GM12878 (cell line): ENCODE measurements at regions of chr12 and their contacts with region 1.

Region 1: GRCh38 chr12:89524541-89525285 is at the start of gene GALNT4:
- DNase-seq: peak; percentile 42
- ATAC-seq: peak; percentile 86
- H3K4me3 ChIP-seq: peak within 1 kb of the TSS; percentile 96
- H3K27ac ChIP-seq: peak within 1 kb of the TSS; percentile 82
- H3K4me1 ChIP-seq: peaks cover 14% of the 10 kb centered on the region
- H3K27me3 ChIP-seq: no peaks in the 10 kb centered on the region
- CTCF ChIP-seq: peak; percentile 55 to 75 (median 61)
- EP300 ChIP-seq: no peak
- POLR2A ChIP-seq: peak; percentile 65
- RAD21 ChIP-seq: peak; percentile 69
- polyA plus RNA-seq, gene GALNT4: 0.90 to 1.1 TPM

Region 2: GRCh38 chr12:89019408-89020120 is 505.1 kb before region 1 on chr12:
- CTCF ChIA-PET with region 1: interaction called, 11 read pairs
- POLR2A ChIA-PET with region 1: no interaction called
- RAD21 ChIA-PET with region 1: interaction called, 5 read pairs
- SMC1A ChIA-PET with region 1: interaction called, 6 read pairs
- in situ Hi-C with region 1: loop called (anchors 5 kb)
- intact Hi-C with region 1: loop called (anchors 1 kb)
- DNase-seq: peak; percentile 32
- ATAC-seq: peak; percentile 99
- H3K4me3 ChIP-seq: no peak overlapping the region
- H3K27ac ChIP-seq: no peak overlapping the region
- H3K4me1 ChIP-seq: no peaks in the 10 kb centered on the region
- H3K27me3 ChIP-seq: no peaks in the 10 kb centered on the region
- CTCF ChIP-seq: peak; percentile 76 to 91 (median 77); a peak in 5 of 6 replicates
- EP300 ChIP-seq: no peak
- POLR2A ChIP-seq: no peak
- RAD21 ChIP-seq: peak; percentile 91

Region 3: DNA sequence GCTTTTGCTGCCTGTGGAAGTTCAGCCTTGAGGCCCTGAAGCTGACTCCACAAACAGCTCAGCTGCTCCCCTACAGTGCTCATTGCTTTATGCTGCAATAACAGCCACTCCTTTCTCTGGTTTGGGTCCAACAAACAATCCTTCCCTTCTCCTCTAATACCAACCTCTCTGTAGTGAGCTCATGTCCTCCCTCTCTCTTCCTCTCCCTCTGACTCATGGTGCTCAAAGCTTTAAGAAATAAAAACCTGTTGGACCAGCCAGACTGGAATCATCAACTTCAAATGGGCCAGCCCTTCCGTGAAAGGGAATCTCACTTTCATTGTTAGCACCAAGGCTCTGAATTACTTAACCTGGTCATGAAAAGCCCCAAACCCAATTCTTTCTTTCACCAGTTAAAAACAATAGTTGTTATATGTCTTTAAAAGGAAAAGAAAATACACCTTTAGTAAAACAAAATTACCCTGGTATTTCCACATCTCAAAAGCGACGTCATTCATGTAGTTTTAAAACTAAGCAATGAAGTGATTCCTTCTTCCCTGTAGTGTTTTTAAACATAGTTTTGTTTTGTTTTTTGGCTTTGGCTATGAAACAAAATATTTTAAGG is 298.8 kb before region 1 on chr12:
- CTCF ChIA-PET with region 1: interaction called, 3 read pairs
- POLR2A ChIA-PET with region 1: no interaction called
- RAD21 ChIA-PET with region 1: no interaction called
- SMC1A ChIA-PET with region 1: no interaction called
- in situ Hi-C with region 1: no loop called
- intact Hi-C with region 1: loop called (anchors 10 kb)
- DNase-seq: no peak
- ATAC-seq: peak; percentile 82
- H3K4me3 ChIP-seq: no peak overlapping the region
- H3K27ac ChIP-seq: no peak overlapping the region
- H3K4me1 ChIP-seq: no peaks in the 10 kb centered on the region
- H3K27me3 ChIP-seq: no peaks in the 10 kb centered on the region
- CTCF ChIP-seq: no peak
- EP300 ChIP-seq: no peak
- POLR2A ChIP-seq: no peak
- RAD21 ChIP-seq: no peak

Region 4: GRCh38 chr12:89405626-89406345 is 118.9 kb before region 1 on chr12:
- CTCF ChIA-PET with region 1: no interaction called
- POLR2A ChIA-PET with region 1: no interaction called
- RAD21 ChIA-PET with region 1: no interaction called
- SMC1A ChIA-PET with region 1: no interaction called
- in situ Hi-C with region 1: no loop called
- intact Hi-C with region 1: no loop called
- DNase-seq: no peak
- ATAC-seq: no peak
- H3K4me3 ChIP-seq: no peak overlapping the region
- H3K27ac ChIP-seq: no peak overlapping the region
- H3K4me1 ChIP-seq: no peaks in the 10 kb centered on the region
- H3K27me3 ChIP-seq: no peaks in the 10 kb centered on the region
- CTCF ChIP-seq: no peak
- EP300 ChIP-seq: no peak
- POLR2A ChIP-seq: no peak
- RAD21 ChIP-seq: no peak

Region 5: DNA sequence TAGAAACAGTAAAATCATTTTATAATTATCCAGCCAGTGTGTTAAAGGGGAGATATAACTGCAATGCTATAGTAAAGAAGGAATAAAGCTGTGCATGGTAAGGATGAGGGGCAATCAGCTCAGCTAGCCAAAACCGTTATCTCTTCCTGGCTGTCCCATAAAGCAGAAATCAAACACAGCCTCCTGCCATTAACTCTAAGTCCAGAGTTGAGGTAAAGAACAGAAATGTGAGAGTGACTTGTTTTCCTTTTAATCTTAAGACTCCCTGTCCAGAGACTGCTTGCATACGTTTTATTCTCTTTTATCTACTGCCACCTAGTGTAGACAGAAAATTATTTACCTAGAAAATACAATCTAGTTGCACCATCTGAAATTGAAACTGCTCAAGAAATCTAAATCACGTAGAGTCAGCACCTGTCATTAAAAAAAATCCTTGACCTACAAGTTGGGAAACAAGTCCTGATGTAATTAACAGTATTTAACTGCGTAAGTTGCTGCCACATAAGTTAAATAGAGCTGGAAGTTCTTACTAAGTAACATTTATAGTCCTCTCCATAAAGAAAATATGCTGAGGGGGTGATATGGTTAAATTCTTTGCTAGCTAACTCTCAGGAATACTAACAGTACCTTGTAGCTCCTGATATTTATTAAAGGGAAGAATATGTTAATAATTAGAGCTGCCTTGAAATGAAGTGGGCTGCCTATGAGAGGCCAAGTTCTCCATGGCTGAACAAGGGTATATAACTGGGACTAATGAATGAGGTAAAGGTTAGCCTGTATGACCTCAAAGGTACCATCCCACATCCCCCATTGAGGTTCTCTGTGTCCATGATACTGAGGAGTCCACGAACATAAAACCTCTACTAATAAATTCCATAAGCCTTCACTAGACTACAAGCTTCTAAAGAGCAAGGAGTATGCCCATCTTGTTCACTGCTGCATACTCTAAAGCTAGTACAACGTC is 62.8 kb before region 1 on chr12:
- CTCF ChIA-PET with region 1: interaction called, 176 read pairs
- POLR2A ChIA-PET with region 1: interaction called, 3 read pairs
- RAD21 ChIA-PET with region 1: interaction called, 9 read pairs
- SMC1A ChIA-PET with region 1: interaction called, 70 read pairs
- in situ Hi-C with region 1: no loop called
- intact Hi-C with region 1: no loop called
- DNase-seq: no peak
- ATAC-seq: peak; percentile 97
- H3K4me3 ChIP-seq: no peak overlapping the region
- H3K27ac ChIP-seq: no peak overlapping the region
- H3K4me1 ChIP-seq: no peaks in the 10 kb centered on the region
- H3K27me3 ChIP-seq: no peaks in the 10 kb centered on the region
- CTCF ChIP-seq: peak; percentile 30 to 68 (median 55); a peak in 5 of 6 replicates
- EP300 ChIP-seq: no peak
- POLR2A ChIP-seq: no peak
- RAD21 ChIP-seq: peak; percentile 90

Region 6: GRCh38 chr12:89566630-89567151 is 42.0 kb after region 1 on chr12:
- CTCF ChIA-PET with region 1: no interaction called
- POLR2A ChIA-PET with region 1: no interaction called
- RAD21 ChIA-PET with region 1: no interaction called
- SMC1A ChIA-PET with region 1: no interaction called
- in situ Hi-C with region 1: no loop called
- intact Hi-C with region 1: no loop called
- DNase-seq: no peak
- ATAC-seq: peak; percentile 44
- H3K4me3 ChIP-seq: no peak overlapping the region
- H3K27ac ChIP-seq: no peak overlapping the region
- H3K4me1 ChIP-seq: no peaks in the 10 kb centered on the region
- H3K27me3 ChIP-seq: no peaks in the 10 kb centered on the region
- CTCF ChIP-seq: no peak
- EP300 ChIP-seq: no peak
- POLR2A ChIP-seq: no peak
- RAD21 ChIP-seq: no peak